Activated naive CD8-positive, alpha-beta T cell treated with anti-CD3 and anti-CD28 coated beads, Interleukin-2, amount 10 ng/mL, durations not matched to agents 7 days and 5 days (primary cell): ENCODE measurements at regions of chr11 and their contacts with region 1.

Region 1: GRCh38 chr11:122727101-122727929 is 71.8 kb downstream of the UBASH3B start:
- DNase-seq: no peak
- ATAC-seq: peak; percentile 72
- H3K4me3 Mint-ChIP-seq: peak overlapping the region; percentile 82
- H3K27ac Mint-ChIP-seq: peak overlapping the region; percentile 93
- H3K4me1 Mint-ChIP-seq: peaks cover 62% of the 10 kb centered on the region
- H3K27me3 Mint-ChIP-seq: no peaks in the 10 kb centered on the region

Region 2: DNA sequence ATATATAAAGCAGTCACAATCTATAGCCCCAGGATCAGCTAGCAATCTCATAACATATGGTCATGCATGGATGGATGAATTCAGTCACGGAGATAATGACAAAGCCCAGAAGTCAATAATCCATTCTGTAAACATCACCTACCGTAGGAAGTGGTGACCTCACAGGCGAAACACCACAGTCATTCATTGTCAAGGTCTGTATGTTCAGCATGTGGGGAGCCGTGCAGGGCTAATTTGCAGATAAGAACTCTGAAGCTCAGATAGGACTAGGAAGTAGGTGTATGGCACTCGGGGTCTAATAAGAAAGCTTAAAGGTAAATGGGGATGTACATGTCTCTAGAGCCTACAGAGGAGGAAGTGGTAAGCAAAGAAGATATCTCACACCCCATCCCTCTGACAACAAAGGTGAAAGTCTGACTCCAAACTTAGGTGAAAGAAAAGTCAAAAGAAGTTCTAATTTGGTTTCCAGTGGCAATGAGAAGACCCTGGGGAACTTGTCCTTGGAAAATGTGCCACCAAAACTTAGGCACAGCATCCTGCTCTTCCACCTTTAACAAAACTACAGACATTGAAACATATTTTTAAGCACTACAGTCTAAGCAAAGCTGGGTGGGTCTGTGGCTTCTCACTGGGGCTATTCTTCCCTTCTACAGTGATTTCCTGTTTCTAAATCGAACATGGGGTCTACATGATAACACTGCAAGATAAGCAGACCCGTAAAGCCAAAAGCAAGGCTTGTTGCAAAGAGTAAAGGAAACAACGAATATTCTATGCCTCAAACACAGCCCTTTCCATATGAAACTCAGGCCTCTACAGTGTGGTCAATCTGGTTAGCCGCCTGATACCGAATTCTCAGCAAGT is 116.2 kb after region 1 on chr11:
- POLR2A ChIA-PET with region 1: interaction called, 11 read pairs
- DNase-seq: peak; percentile 54
- ATAC-seq: peak; percentile 83
- H3K4me3 Mint-ChIP-seq: peak overlapping the region; percentile 69
- H3K27ac Mint-ChIP-seq: peak overlapping the region; percentile 94
- H3K4me1 Mint-ChIP-seq: peaks cover 60% of the 10 kb centered on the region
- H3K27me3 Mint-ChIP-seq: no peaks in the 10 kb centered on the region